Breast epithelium (tissue), 4 donors: ENCODE measurements at regions of chr1 and their contacts with region 1.

Region 1: GRCh38 chr1:81437649-81438048 is 363.1 kb upstream of the ADGRL2 start:
- DNase-seq: no peak
- H3K4me3 ChIP-seq: no peak overlapping the region
- H3K27ac ChIP-seq: no peak overlapping the region
- H3K4me1 ChIP-seq: no peaks in the 10 kb centered on the region
- H3K27me3 ChIP-seq: no peaks in the 10 kb centered on the region
- CTCF ChIP-seq: no peak
- POLR2A ChIP-seq: no peak

Region 2: DNA sequence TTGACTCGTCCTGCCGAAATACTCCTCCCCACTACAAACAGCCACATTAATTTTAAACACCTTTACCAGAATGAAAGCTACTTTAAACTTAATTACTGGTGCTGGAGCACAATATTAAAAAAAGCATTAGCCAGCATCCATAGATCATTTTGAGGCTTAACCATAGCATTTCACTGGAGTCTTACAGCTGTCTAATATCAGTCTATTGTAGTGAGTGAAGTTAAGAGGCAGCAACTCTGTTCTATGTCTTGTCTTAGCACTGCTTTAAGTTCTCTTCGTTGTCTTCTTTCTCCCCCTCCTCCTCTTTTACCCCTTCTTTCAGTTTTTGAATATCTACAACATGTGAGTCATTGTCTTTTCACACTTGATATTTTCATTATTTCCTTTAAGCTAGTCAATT is 412.4 kb after region 1 on chr1:
- intact Hi-C with region 1: loop called (anchors 5 kb)
- DNase-seq: no peak
- H3K4me3 ChIP-seq: no peak overlapping the region
- H3K27ac ChIP-seq: no peak overlapping the region
- H3K4me1 ChIP-seq: no peaks in the 10 kb centered on the region
- H3K27me3 ChIP-seq: no peaks in the 10 kb centered on the region
- CTCF ChIP-seq: no peak
- POLR2A ChIP-seq: no peak